Breast epithelium (tissue), 4 donors: ENCODE measurements at regions of chr15 and their contacts with region 1.

Region 1: DNA sequence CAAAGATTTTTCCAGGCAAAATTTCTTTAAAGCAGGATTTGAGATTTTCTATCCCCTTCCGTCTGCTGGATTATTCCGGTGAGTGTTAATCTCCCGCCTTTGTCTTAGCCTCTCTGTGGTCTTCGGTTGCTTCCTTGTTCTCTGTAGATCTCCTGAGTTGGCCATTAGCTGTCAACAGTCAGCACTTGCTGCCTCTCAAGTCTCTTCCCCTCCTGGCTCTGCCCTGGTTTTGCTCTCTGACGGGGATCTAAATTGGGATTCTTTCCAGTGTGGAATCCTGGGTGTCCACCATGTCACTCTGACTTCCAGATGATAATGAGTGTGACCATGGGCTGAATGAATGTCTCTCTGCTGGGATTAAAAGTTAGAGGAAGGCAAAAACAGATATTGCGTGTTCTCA is 121.5 kb downstream of the IGF1R start:
- DNase-seq: no peak
- H3K4me3 ChIP-seq: no peak overlapping the region
- H3K27ac ChIP-seq: no peak overlapping the region
- H3K4me1 ChIP-seq: no peaks in the 10 kb centered on the region
- H3K27me3 ChIP-seq: no peaks in the 10 kb centered on the region
- CTCF ChIP-seq: no peak
- POLR2A ChIP-seq: no peak

Region 2: GRCh38 chr15:98720577-98721565 is 49.0 kb before region 1 on chr15:
- intact Hi-C with region 1: loop called (anchors 5 kb)
- DNase-seq: no peak
- H3K4me3 ChIP-seq: no peak overlapping the region
- H3K27ac ChIP-seq: peak overlapping the region in 1 of 2 donors; percentile 6
- H3K4me1 ChIP-seq: peaks cover 3 to 21% of the 10 kb centered on the region in 2 donors
- H3K27me3 ChIP-seq: no peaks in the 10 kb centered on the region
- CTCF ChIP-seq: no peak
- POLR2A ChIP-seq: no peak